WTC11 (cell line): ENCODE measurements at regions of chr20 and their contacts with region 1.

Region 1: DNA sequence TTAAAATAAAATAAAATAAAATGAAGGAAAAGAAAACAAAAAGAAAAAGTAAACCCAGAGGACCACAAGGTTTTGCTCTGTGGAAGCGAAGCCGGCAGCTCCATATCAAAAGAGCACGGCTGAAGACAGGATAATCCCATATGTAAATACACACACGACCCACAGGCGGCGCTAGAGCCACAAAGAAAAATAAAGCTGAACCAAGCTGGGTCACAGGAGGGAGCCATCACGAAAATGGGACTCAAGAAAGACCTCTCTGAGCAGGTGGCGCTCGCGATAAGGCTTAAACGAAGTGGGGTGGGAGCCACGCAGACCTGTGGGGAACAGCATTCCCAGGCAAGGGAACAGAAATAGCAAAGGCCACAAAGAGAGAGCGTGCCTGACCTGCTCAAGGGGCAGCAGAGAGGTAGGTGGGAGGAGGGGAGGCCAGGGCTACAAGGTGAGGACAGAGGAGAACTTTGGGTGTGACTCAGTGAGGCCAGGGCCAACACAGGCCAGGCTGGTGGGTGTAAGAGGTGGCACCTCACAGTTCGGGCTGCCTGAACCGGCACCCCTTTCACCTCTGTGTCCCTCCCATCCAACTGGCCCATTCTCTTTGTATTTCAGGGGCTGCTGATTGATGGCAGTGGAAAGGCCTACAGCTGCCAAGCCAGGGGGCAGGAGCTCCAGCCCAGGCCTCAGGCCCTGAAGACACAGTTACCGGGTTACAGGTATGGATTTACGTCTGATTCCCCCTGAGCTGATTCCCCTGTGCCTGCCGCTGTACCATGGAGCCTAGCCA is 26.0 kb downstream of the PTGIS start:
- DNase-seq: peak; percentile 79
- ATAC-seq: peak; percentile 72
- H3K4me3 Mint-ChIP-seq: no peak overlapping the region
- H3K27ac Mint-ChIP-seq: no peak overlapping the region
- H3K4me1 Mint-ChIP-seq: peaks cover 3% of the 10 kb centered on the region; the same call in 1 of the 2 replicates
- H3K27me3 Mint-ChIP-seq: no peaks in the 10 kb centered on the region
- CTCF ChIP-seq: peak; percentile 85

Region 2: GRCh38 chr20:49344975-49345374 is 196.9 kb before region 1 on chr20:
- CTCF ChIA-PET with region 1: interaction called, 10 read pairs
- POLR2A ChIA-PET with region 1: no interaction called
- DNase-seq: no peak
- ATAC-seq: no peak
- H3K4me3 Mint-ChIP-seq: no peak overlapping the region
- H3K27ac Mint-ChIP-seq: no peak overlapping the region
- H3K4me1 Mint-ChIP-seq: peaks cover 5% of the 10 kb centered on the region
- H3K27me3 Mint-ChIP-seq: no peaks in the 10 kb centered on the region
- CTCF ChIP-seq: no peak

Region 3: DNA sequence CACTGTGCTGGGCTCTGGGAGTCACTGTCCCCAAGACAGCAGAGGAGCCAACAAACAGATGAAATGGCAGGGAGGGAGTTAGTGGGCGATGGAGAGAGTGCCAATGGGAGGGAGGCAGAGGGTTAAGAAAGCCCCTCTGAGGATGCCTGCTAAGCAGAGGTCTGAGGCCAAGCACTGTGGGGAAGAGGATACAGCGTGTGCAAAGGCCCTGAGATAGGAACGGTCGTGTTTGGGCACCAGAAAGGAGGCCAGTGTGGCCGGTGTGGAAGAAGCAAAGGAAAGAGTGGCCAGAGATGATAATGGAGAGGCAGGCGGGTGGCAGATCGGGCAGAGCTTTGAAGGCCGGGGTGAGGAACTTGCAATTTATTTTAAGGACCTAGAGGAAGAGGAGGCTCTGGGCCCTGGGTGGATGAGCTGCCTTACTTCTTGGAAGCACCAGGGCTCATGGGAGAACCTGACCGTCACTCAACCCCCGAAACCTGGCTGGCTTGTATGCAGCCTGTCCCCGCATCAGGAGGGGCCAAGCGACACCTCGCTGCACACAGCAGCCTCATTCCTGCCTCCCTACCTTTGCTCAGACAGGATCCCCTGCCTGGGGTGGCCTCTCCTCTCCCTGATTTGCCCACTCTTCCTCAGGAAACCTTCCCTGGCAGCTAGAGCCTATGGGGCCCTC is 132.5 kb before region 1 on chr20:
- CTCF ChIA-PET with region 1: no interaction called
- POLR2A ChIA-PET with region 1: no interaction called
- DNase-seq: no peak
- ATAC-seq: no peak
- H3K4me3 Mint-ChIP-seq: no peak overlapping the region
- H3K27ac Mint-ChIP-seq: peak overlapping the region; percentile 70; the same call in 1 of the 2 replicates
- H3K4me1 Mint-ChIP-seq: peaks cover 7% of the 10 kb centered on the region
- H3K27me3 Mint-ChIP-seq: no peaks in the 10 kb centered on the region; the same call in 1 of the 2 replicates
- CTCF ChIP-seq: no peak

Region 4: DNA sequence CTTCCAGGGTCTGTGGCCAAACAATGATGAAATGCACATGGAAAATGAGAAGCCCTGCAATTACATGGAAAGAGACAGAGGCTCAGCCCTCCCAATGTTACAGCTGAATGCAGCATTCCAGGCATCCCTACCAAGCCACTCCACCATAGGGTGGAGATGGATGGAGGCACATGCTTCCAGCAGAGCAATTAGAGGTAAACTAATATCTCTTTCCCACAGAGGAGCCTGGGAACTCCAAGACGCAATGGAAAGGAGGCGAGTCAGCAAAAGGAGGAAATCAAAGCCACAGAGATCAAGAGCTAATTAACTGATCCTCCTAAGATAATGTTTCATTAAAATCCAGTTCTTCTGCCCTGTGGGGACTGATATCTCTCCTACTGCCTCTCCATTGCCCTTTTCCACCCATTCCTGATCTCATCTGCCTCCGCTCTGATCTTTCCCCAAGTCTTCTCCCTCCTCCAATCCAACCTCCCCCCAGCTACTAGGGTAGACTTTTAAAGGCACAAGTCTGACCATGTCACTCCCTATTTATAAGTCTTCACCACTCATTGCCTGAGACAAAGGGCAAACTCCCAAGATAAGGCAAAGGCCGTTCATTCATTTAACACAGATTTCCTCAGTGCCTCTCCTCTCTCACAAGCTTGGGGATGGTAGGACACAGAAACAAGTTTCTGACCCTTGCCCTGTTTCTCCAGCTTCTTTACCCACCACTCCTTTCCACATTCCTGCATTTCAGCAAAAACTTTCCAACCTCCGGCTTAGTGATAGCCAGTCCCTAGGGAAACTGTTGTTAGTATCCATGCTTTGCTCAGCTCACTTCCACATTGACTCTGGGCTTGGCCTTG is 45.1 kb before region 1 on chr20:
- CTCF ChIA-PET with region 1: interaction called, 10 read pairs
- POLR2A ChIA-PET with region 1: no interaction called
- DNase-seq: no peak
- ATAC-seq: peak; percentile 21; the same call in 1 of the 2 replicates
- H3K4me3 Mint-ChIP-seq: no peak overlapping the region
- H3K27ac Mint-ChIP-seq: no peak overlapping the region
- H3K4me1 Mint-ChIP-seq: peaks cover 9% of the 10 kb centered on the region
- H3K27me3 Mint-ChIP-seq: peaks cover 3% of the 10 kb centered on the region
- CTCF ChIP-seq: no peak

Region 5: GRCh38 chr20:49562311-49563014 is 20.5 kb after region 1 on chr20:
- CTCF ChIA-PET with region 1: interaction called, 15 read pairs
- POLR2A ChIA-PET with region 1: no interaction called
- DNase-seq: peak; percentile 55
- ATAC-seq: peak; percentile 88
- H3K4me3 Mint-ChIP-seq: no peak overlapping the region
- H3K27ac Mint-ChIP-seq: peak overlapping the region; percentile 95
- H3K4me1 Mint-ChIP-seq: peaks cover 38% of the 10 kb centered on the region
- H3K27me3 Mint-ChIP-seq: no peaks in the 10 kb centered on the region
- CTCF ChIP-seq: no peak

Region 6: GRCh38 chr20:49583669-49584417 is 41.9 kb after region 1 on chr20:
- CTCF ChIA-PET with region 1: interaction called, 46 read pairs
- POLR2A ChIA-PET with region 1: no interaction called
- DNase-seq: no peak
- ATAC-seq: no peak
- H3K4me3 Mint-ChIP-seq: no peak overlapping the region
- H3K27ac Mint-ChIP-seq: no peak overlapping the region
- H3K4me1 Mint-ChIP-seq: peaks cover 14% of the 10 kb centered on the region
- H3K27me3 Mint-ChIP-seq: no peaks in the 10 kb centered on the region
- CTCF ChIP-seq: no peak

Region 7: DNA sequence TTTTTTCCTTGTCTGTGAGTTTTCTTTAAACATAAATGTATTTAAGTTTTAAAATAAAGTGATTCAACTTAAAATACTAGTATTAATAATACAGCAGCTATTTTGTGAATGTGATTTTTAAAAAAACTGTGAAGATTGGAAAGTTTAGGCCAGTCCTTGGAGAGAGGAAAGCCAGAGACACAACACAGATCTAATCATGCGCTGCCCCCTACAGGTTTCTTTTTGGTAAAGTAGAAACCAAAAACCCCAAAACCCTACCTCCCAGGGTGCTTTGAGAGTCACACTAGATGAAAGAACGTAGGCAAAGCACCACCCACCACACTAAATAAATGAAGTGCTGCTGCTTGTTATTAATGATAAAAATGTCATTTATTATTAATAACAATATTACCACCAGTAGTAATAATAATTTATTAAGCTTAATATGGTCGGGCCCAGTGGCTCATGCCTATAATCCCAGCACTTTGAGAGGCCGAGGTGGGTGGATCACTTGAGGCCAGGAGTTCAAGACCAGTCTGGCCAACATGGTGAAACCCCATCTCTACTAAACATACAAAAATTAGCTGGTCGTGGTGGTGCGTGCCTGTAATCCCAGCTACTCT is 304.4 kb after region 1 on chr20:
- CTCF ChIA-PET with region 1: interaction called, 15 read pairs
- POLR2A ChIA-PET with region 1: no interaction called
- DNase-seq: peak; percentile 39
- ATAC-seq: peak; percentile 84
- H3K4me3 Mint-ChIP-seq: no peak overlapping the region
- H3K27ac Mint-ChIP-seq: no peak overlapping the region
- H3K4me1 Mint-ChIP-seq: peaks cover 35% of the 10 kb centered on the region
- H3K27me3 Mint-ChIP-seq: no peaks in the 10 kb centered on the region
- CTCF ChIP-seq: peak; percentile 26; the same call in 1 of the 2 replicates